Cardiac septum (tissue), 1 donor: ENCODE measurements at regions of chr2 and their contacts with region 1.

Region 1: DNA sequence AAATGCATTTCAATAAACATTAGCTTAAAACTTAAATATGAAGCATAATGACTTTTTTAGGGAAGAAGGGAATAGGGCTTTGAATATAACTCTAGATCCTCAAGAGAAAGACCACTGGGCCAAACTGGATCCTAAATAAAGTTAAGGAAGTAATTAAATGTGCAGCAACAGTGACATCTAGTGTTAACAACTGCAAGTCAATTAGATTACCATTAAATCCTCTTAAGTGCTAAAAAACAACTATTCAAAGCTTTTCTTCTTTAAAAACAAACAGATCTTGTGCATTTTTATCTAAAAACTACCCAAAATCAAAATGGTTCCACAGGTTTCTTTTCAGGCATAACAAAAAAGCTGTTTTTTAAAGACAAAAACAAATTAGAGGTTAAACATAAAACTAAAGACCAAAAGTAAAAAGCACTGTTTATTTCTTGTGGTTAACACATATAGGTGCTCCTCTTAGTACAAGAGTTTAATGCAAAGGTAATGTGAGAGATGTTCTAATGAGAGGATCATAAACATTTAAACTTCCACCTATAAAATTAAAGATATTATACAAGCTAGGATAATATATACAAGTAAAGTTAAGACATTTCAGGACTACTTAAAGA is 111.4 kb downstream of the THADA start:
- DNase-seq: no peak

Region 2: DNA sequence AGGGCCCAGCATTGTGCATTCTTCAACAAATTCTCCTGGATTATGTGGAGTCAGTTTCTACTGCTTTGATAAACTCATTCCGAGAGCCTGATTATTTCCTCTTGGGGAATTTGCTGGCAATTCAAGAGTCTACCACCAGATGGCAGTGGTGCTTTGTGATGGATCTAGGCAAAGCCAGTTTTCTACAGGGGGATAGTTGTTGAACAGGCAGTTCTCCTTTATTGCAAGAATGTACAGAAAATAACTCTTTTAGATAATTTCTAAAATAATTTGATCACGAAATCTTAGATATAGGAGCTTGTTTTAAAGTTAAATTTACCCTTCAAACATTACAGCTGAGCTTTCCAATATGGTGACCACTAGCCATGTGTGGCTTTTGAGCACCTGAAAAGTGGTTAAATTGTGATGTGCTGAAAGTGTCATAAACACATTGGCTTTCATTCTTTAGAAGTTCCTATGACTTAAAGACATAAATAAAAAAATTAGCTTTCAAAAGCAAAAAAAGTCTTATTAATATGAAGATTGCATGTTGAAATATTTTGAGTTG is 625.3 kb before region 1 on chr2:
- intact Hi-C with region 1: loop called (anchors 5 kb)
- DNase-seq: peak; percentile 56

Region 3: DNA sequence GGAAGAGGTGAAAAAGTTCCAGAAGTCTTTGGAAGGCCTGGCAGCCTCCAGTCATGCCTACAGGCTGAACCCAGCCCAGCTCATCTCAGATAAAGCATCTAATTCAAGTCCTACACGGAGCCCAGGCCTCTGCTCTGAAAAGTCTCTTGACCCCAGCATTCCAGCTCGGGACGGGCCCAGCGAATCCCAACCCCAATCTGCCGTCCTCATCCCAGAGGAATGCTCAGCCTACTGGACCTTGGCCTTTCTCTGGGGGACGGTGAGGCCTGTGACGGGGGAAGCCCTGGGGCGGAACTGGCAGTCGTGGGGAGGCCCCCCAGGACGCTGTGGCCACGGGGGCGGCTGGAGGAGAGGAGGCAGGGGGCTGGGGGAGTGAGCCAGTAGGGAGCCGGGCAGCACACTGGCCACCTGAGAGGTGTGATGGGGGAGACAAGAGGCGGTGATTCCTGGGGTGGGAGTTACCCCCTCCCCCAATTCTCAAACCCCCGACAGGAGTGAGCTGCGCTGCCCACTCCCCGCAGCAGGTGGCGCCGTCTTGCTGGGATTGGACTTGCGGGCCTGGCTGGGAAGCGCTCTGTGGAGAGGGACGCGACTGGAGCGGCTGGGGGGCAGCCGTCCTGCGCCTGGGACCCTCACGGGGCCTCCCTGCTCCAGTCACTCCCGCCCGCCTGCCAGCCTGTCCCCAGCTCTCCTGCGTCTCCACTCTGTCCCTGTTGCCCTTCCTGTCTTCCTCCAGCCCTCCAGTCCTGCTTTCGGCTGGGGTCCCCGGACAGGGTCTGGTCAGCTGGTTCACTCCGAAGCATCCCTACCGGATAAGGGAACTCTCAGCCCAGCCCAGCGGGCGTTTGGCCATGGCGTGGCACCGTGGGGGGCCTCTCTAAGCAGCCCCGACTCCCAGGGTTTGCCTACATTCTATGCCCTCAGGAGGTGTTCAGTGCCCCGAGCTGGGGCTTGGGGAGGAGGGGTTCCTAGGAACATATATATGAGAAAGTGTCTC is 509.4 kb before region 1 on chr2:
- intact Hi-C with region 1: loop called (anchors 5 kb)
- DNase-seq: peak; percentile 90

Region 4: DNA sequence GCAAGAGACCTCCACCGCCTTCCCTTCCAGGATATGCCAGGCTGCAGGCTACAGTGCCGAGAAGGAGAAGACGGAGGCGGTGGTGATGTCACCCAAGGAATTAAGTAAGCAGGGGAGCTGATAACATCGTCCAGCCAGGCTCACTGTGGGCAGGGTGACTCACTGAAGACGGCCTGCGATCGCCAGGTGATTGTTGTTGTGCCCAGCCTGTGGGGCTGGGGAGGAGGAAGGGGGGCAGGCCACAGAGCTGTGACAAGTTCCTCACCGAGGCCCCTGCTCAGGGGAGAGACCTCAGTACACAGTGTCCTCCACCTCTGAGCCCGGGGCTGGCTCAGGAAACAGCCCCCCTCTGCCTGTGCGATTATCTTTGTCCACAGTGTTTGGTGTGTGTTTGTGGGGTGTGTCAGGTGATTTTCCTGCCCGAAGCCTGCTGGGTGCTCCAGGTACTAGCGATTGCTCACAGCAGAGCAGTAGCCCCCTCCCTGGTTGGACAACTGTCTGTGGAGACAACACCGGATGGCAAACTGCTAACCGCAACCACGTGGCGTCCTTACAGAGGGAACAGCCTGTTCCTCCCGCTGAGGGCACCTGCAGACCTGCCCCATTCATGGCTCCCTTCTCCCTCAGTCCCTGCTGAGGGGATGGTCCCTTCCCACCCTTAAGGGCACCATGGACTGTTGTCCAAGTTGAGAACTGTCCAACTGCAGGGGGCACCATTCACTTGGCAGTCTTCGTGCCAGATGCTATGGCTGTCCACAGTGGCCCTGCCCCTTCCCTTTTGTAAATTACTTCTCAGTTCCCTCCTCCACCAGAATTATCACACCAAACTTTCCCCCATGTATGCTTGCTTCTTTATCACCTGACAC is 353.2 kb before region 1 on chr2:
- intact Hi-C with region 1: loop called (anchors 5 kb)
- DNase-seq: peak; percentile 91

Region 5: GRCh38 chr2:43345391-43345813 is 139.0 kb before region 1 on chr2:
- intact Hi-C with region 1: loop called (anchors 5 kb)
- DNase-seq: no peak

Region 6: GRCh38 chr2:43585708-43586107 is 101.3 kb after region 1 on chr2:
- intact Hi-C with region 1: no loop called
- DNase-seq: no peak